ENCODE measurements at regions of chr17 and their contacts with region 1.

Region 1: GRCh38 chr17:57671667-57672632 is 73.1 kb downstream of the CCDC182 start:
- DNase-seq: peak; percentile 55
- H3K4me3 ChIP-seq: no peak overlapping the region
- H3K27ac ChIP-seq: no peak overlapping the region
- H3K4me1 ChIP-seq: no peaks in the 10 kb centered on the region
- H3K27me3 ChIP-seq: no peaks in the 10 kb centered on the region
- CTCF ChIP-seq: peak; percentile 89

Region 2: GRCh38 chr17:57211543-57211942 is 460.4 kb before region 1 on chr17:
- intact Hi-C with region 1: no loop called
- DNase-seq: no peak
- H3K4me3 ChIP-seq: no peak overlapping the region
- H3K27ac ChIP-seq: no peak overlapping the region
- H3K4me1 ChIP-seq: no peaks in the 10 kb centered on the region
- H3K27me3 ChIP-seq: no peaks in the 10 kb centered on the region
- CTCF ChIP-seq: no peak

Region 3: DNA sequence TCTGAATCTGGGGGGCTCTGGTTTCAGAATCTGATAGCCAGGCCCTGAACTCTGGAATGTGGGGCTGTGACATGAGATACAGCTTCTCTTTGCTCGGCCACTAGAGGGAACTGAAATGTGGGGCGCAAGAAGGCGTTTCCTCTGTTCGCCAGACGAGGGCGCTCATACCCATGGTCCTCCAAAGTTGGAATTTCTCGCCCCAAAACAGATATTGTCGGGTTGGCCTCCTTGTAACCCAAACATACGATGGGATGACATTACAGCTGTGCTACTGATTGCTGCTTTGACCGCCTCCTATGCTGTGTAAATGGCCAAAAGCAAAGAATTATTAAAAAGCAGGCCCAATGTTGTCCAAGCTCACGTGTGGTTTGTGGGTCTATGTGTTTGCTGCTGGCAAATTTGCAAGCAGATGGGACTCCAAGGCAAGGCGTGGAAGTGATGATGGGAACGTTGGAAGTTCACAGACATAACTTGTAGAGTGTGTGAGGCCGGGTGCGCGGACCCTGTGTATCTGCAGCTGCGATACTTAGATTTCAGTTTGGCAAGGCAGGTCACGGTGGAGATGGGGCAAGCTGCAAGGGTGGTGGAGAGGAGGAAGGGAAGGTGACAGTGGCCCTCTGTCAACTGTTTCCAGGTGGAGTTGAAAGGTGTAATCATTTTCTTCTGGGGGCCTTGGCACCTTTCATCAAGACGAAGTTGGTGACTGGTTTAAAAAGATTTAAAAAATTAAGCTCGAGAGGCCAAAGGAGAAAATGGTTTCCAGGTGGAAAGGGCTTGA is 428.6 kb before region 1 on chr17:
- intact Hi-C with region 1: loop called (anchors 2 kb)
- DNase-seq: peak; percentile 72
- H3K4me3 ChIP-seq: no peak overlapping the region
- H3K27ac ChIP-seq: no peak overlapping the region
- H3K4me1 ChIP-seq: no peaks in the 10 kb centered on the region
- H3K27me3 ChIP-seq: no peaks in the 10 kb centered on the region
- CTCF ChIP-seq: peak; percentile 97

Region 4: GRCh38 chr17:57574040-57574545 is 97.9 kb before region 1 on chr17:
- intact Hi-C with region 1: no loop called
- DNase-seq: peak; percentile 31
- H3K4me3 ChIP-seq: no peak overlapping the region
- H3K27ac ChIP-seq: no peak overlapping the region
- H3K4me1 ChIP-seq: no peaks in the 10 kb centered on the region
- H3K27me3 ChIP-seq: no peaks in the 10 kb centered on the region
- CTCF ChIP-seq: no peak

Region 5: DNA sequence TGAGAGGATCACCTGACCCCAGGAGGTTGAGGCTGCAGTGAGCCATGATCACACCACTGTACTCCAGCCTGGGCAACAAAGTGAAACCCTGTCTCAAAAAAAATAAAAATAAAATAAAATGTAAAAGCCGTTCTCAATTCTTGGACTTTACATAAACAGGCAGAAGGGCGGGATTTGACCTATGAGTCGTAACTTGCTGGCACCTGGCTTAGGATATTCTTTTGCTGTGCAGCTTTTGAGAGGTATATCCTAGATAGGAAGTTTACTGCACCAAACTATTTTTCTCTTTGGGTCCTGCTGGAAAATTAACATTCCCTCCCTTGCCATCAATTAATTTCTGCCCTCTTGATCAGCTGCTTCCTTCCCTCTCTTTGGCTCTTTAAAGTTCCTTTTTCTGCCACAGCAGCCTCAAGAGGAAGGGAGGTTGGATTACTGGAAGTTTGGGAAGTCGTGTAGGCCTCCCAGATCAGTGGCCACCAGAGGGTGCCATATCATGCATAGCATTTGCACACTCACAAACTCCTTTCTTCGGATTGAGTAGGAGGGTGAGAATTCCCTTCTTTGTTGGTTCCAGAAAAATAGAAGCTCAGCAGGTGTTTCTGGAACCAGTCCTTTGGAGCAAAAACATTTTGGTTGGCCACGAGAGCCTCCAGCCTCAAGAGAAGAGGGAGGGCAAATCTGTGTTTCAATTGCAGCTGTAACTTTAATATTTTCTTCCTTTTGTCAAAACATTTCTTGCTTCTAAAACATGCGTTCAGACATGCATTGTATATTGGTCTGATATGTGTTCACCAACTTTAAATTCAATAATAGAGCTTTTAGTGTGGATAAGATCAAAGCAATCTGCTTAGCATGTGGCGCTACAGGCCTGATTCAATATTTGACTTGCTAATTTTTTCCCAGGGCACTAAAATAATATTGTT is 74.2 kb before region 1 on chr17:
- intact Hi-C with region 1: loop called (anchors 5 kb)
- DNase-seq: peak; percentile 72
- H3K4me3 ChIP-seq: no peak overlapping the region
- H3K27ac ChIP-seq: no peak overlapping the region
- H3K4me1 ChIP-seq: no peaks in the 10 kb centered on the region
- H3K27me3 ChIP-seq: no peaks in the 10 kb centered on the region
- CTCF ChIP-seq: peak; percentile 77

Measured in colonic mucosa (tissue), 4 donors.